Activated CD4-positive, alpha-beta memory T cell treated with anti-CD3 and anti-CD28 coated beads for 36 hours (primary cell): ENCODE measurements at regions of chr2 and their contacts with region 1.

Region 1: GRCh38 chr2:64330281-64331113 is 123.5 kb upstream of the LGALSL start:
- DNase-seq: peak; percentile 82
- H3K4me3 Mint-ChIP-seq: peak overlapping the region; percentile 54
- H3K27ac Mint-ChIP-seq: peak overlapping the region; percentile 46
- H3K4me1 Mint-ChIP-seq: peaks cover 41% of the 10 kb centered on the region
- H3K27me3 Mint-ChIP-seq: no peaks in the 10 kb centered on the region

Region 2: GRCh38 chr2:63424329-63425078 is 906.0 kb before region 1 on chr2:
- CTCF ChIA-PET with region 1: no interaction called
- POLR2A ChIA-PET with region 1: no interaction called
- intact Hi-C with region 1: no loop called
- DNase-seq: no peak
- H3K4me3 Mint-ChIP-seq: no peak overlapping the region
- H3K27ac Mint-ChIP-seq: no peak overlapping the region
- H3K4me1 Mint-ChIP-seq: no peaks in the 10 kb centered on the region
- H3K27me3 Mint-ChIP-seq: no peaks in the 10 kb centered on the region

Region 3: GRCh38 chr2:64036034-64036705 is 294.3 kb before region 1 on chr2:
- CTCF ChIA-PET with region 1: interaction called, 15 read pairs
- POLR2A ChIA-PET with region 1: interaction called, 18 read pairs
- intact Hi-C with region 1: loop called (anchors 1 kb)
- DNase-seq: peak; percentile 27
- H3K4me3 Mint-ChIP-seq: peak overlapping the region; percentile 3
- H3K27ac Mint-ChIP-seq: peak overlapping the region; percentile 75
- H3K4me1 Mint-ChIP-seq: peaks cover 48% of the 10 kb centered on the region
- H3K27me3 Mint-ChIP-seq: peaks cover 2% of the 10 kb centered on the region

Region 4: GRCh38 chr2:64114063-64114911 is 216.2 kb before region 1 on chr2:
- CTCF ChIA-PET with region 1: interaction called, 10 read pairs
- POLR2A ChIA-PET with region 1: interaction called, 4 read pairs
- intact Hi-C with region 1: loop called (anchors 1 kb)
- DNase-seq: no peak
- H3K4me3 Mint-ChIP-seq: no peak overlapping the region
- H3K27ac Mint-ChIP-seq: peak overlapping the region; percentile 85
- H3K4me1 Mint-ChIP-seq: peaks cover 70% of the 10 kb centered on the region
- H3K27me3 Mint-ChIP-seq: no peaks in the 10 kb centered on the region

Region 5: GRCh38 chr2:64222351-64222750 is 108.1 kb before region 1 on chr2:
- CTCF ChIA-PET with region 1: interaction called, 11 read pairs
- POLR2A ChIA-PET with region 1: interaction called, 9 read pairs
- intact Hi-C with region 1: no loop called
- DNase-seq: no peak
- H3K4me3 Mint-ChIP-seq: no peak overlapping the region
- H3K27ac Mint-ChIP-seq: no peak overlapping the region
- H3K4me1 Mint-ChIP-seq: peaks cover 33% of the 10 kb centered on the region
- H3K27me3 Mint-ChIP-seq: no peaks in the 10 kb centered on the region

Region 6: GRCh38 chr2:64318476-64318748 is 12.1 kb before region 1 on chr2:
- CTCF ChIA-PET with region 1: interaction called, 38 read pairs
- POLR2A ChIA-PET with region 1: no interaction called
- intact Hi-C with region 1: no loop called
- DNase-seq: peak; percentile 23
- H3K4me3 Mint-ChIP-seq: no peak overlapping the region
- H3K27ac Mint-ChIP-seq: no peak overlapping the region
- H3K4me1 Mint-ChIP-seq: peaks cover 7% of the 10 kb centered on the region
- H3K27me3 Mint-ChIP-seq: peaks cover 2% of the 10 kb centered on the region

Region 7: DNA sequence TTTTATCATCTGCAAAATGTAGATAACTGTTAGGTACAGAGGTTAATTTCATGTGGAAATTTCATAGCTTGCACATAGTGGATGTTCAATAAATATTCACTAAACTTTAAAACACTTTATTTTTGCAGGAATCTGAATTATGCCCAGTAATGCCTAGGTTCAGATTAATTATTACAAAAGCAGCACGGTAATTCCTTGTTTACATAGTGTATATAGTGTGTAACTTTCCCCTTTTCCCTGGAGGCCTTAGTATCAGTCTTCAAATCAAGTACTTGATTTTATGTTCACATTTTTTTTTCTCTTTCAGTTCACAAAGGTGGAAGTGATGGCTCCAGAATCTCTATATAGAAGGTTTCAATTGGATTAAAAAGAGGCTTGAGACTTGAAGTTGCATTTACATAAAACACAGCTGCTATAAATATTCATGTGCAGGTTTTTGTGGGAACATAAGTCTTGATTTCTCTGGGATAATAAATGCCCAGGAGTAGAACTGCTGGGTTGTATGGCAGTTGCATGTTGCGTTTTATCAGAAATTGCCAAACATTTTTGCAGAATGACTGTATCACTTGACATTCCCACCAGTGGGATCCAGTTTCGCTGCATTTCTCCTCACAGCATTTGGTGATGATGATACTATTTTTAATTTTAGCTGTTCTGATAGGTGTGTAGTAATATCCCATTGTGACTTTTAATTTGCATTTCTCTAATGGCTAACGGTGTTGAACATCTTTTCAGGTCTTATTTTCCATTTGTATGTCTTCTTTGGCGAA is 95.9 kb after region 1 on chr2:
- CTCF ChIA-PET with region 1: no interaction called
- POLR2A ChIA-PET with region 1: no interaction called
- intact Hi-C with region 1: no loop called
- DNase-seq: no peak
- H3K4me3 Mint-ChIP-seq: no peak overlapping the region
- H3K27ac Mint-ChIP-seq: no peak overlapping the region
- H3K4me1 Mint-ChIP-seq: no peaks in the 10 kb centered on the region
- H3K27me3 Mint-ChIP-seq: no peaks in the 10 kb centered on the region

Region 8: DNA sequence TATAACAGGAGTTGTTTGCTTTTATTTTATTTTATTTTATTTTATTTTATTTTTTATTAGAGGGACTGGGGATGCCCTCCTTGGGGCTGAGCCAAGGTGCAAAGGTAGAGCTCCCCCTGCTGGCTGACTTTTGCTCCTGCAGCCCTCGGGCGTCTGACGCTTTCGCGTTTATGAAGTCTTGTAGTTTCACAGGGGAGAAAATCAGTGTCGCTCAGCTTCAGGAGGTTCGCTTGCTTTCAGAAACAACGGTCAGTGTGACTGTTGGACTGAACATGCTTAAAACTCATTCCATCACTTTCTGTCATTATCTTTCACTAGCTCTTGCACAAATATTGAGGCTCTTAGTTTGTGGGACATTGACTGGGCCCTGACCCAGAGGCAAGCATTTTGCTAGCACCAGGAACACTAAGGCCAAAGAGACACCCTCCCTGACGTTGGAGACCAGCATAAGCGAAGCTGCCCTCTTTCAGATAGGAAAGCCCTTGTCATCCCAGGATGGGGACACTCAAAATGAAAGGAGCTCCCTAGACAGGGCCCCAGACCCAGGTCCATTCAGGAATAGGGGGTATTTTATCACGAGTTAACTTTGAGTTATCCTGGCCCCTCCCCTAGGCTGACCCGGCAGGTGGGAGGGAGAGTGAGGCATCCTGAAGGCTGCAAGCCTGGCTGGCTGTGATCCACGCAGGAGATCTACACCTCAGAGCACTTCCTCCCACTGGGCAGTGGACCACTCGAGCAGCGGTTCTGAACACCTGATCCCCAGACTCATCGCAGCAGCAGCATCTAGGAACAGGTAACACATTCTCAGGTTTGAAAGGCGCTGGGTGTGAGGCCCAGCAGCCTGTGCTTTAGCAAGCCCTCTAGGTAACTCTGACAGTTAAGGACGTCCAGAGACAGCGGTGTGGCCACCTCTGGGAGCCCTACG is 157.8 kb after region 1 on chr2:
- CTCF ChIA-PET with region 1: interaction called, 368 read pairs
- POLR2A ChIA-PET with region 1: interaction called, 5 read pairs
- intact Hi-C with region 1: loop called (anchors 1 kb)
- DNase-seq: peak; percentile 85
- H3K4me3 Mint-ChIP-seq: no peak overlapping the region
- H3K27ac Mint-ChIP-seq: no peak overlapping the region
- H3K4me1 Mint-ChIP-seq: peaks cover 10% of the 10 kb centered on the region
- H3K27me3 Mint-ChIP-seq: peaks cover under 1% of the 10 kb centered on the region

Region 9: DNA sequence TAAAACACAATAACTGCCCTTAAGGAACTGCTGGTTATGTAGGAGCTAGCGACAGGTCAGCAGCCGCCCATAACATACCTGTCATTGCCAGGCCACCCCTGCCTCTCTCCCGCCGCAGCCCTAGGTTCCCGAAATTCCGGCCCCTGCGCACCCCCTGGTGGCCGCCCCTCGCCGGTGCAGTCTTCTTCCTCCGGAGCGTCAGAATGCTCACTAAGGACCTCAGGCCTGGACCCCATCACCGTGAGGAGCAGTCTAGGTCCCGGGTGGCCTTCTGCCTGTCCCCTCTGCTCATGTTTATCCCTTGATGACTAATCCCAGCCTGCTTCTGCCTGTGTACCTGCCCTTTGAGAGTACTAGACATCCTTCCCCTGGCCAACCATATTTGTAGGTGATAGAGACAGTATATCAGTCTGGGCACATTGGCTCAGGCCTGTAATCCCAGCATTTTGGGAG is 543.0 kb after region 1 on chr2:
- CTCF ChIA-PET with region 1: interaction called, 19 read pairs
- POLR2A ChIA-PET with region 1: no interaction called
- intact Hi-C with region 1: loop called (anchors 2 kb)
- DNase-seq: peak; percentile 89
- H3K4me3 Mint-ChIP-seq: peak overlapping the region; percentile 23
- H3K27ac Mint-ChIP-seq: no peak overlapping the region
- H3K4me1 Mint-ChIP-seq: peaks cover 7% of the 10 kb centered on the region
- H3K27me3 Mint-ChIP-seq: peaks cover 2% of the 10 kb centered on the region